ENCODE measurements at regions of chr1 and their contacts with region 1.

Region 1: GRCh38 chr1:170967042-170967910 is 31.9 kb downstream of the MROH9 start:
- DNase-seq: peak; percentile 11
- H3K27ac ChIP-seq: no peak overlapping the region
- CTCF ChIP-seq: peak; percentile 52

Region 2: GRCh38 chr1:171226747-171227370 is 259.6 kb after region 1 on chr1:
- CTCF ChIA-PET with region 1: interaction called, 10 read pairs
- POLR2A ChIA-PET with region 1: no interaction called
- DNase-seq: peak; percentile 49
- H3K27ac ChIP-seq: no peak overlapping the region
- CTCF ChIP-seq: peak; percentile 68

Region 3: GRCh38 chr1:171313835-171314320 is 346.6 kb after region 1 on chr1 and contains the start of gene FMO4:
- CTCF ChIA-PET with region 1: interaction called, 11 read pairs
- POLR2A ChIA-PET with region 1: no interaction called
- DNase-seq: peak; percentile 98
- H3K27ac ChIP-seq: no peak within 1 kb of the TSS
- CTCF ChIP-seq: peak; percentile 82

Measured in RWPE1 (cell line).